ENCODE measurements at regions of chr11 and their contacts with region 1.

Region 1: GRCh38 chr11:50030193-50030592 is 2.5 kb upstream of the OR4C45 start:
- DNase-seq: no peak
- H3K4me3 ChIP-seq: no peak overlapping the region
- H3K27ac ChIP-seq: peak overlapping the region; percentile 42
- H3K4me1 ChIP-seq: no peaks in the 10 kb centered on the region
- H3K27me3 ChIP-seq: no peaks in the 10 kb centered on the region
- CTCF ChIP-seq: no peak

Region 2: DNA sequence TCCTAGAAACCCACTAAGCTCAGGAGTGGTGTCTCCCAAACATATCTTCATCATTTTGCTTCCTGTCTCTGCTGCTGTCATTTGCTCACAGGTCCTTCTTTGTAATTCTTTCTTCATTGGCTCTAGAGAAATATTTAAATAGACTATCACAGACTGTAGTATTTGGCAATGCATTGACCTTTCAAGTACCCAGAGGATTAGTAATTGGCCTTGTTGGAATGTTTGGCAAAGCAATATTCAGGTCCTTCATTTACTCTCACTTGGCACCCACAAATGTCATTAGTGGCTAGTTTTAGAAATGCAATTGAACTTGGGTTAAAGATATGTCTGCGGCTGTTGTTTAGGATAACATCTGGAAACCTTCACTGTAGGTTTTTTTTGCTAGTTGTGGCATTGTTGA is 1675.5 kb before region 1 on chr11:
- intact Hi-C with region 1: loop called (anchors 5 kb)
- DNase-seq: no peak
- H3K4me3 ChIP-seq: no peak overlapping the region
- H3K27ac ChIP-seq: no peak overlapping the region
- H3K4me1 ChIP-seq: no peaks in the 10 kb centered on the region
- H3K27me3 ChIP-seq: no peaks in the 10 kb centered on the region
- CTCF ChIP-seq: no peak

Region 3: GRCh38 chr11:50155515-50155914 is 125.3 kb after region 1 on chr11:
- intact Hi-C with region 1: no loop called
- DNase-seq: no peak
- H3K4me3 ChIP-seq: no peak overlapping the region
- H3K27ac ChIP-seq: no peak overlapping the region
- H3K4me1 ChIP-seq: peaks cover 9% of the 10 kb centered on the region
- H3K27me3 ChIP-seq: no peaks in the 10 kb centered on the region
- CTCF ChIP-seq: no peak

Region 4: GRCh38 chr11:50174189-50174588 is 144.0 kb after region 1 on chr11:
- intact Hi-C with region 1: no loop called
- DNase-seq: no peak
- H3K4me3 ChIP-seq: no peak overlapping the region
- H3K27ac ChIP-seq: no peak overlapping the region
- H3K4me1 ChIP-seq: no peaks in the 10 kb centered on the region
- H3K27me3 ChIP-seq: no peaks in the 10 kb centered on the region
- CTCF ChIP-seq: peak; percentile 59

Measured in left ventricle myocardium inferior (tissue), 1 donor.